ENCODE measurements at regions of chr12 and their contacts with region 1.

Region 1: DNA sequence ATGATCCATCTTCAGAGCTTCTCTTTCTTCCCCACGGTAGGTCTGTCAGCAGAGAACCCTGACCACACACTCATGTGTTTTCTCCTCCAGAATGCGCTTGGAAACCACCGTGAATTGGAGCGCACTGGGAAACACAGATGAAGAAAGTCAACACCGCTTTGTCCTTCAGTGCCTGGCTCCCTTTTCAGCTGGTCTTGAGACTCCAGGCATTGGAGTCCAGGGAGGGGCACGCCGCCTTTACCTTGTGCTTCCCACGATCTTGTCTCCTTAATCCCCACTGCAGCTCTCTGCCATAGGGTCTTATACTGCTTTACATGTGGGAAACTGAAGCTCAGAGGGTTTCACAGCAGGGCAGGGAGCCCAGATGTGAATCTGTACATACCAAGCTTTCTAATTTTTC is 1.1 kb downstream of the FAM90A1 start:
- DNase-seq: no peak
- H3K4me3 ChIP-seq: no peak overlapping the region
- H3K27ac ChIP-seq: no peak overlapping the region
- H3K4me1 ChIP-seq: peaks cover 7% of the 10 kb centered on the region
- H3K27me3 ChIP-seq: no peaks in the 10 kb centered on the region
- CTCF ChIP-seq: no peak
- POLR2A ChIP-seq: no peak

Region 2: GRCh38 chr12:7995266-7995963 is 230.9 kb before region 1 on chr12:
- intact Hi-C with region 1: no loop called
- DNase-seq: peak in 1 of 2 donors; percentile 87
- H3K4me3 ChIP-seq: no peak overlapping the region
- H3K27ac ChIP-seq: peak overlapping the region; percentile 63
- H3K4me1 ChIP-seq: no peaks in the 10 kb centered on the region
- H3K27me3 ChIP-seq: no peaks in the 10 kb centered on the region
- CTCF ChIP-seq: peak; percentile 48 to 95 (median 83)
- POLR2A ChIP-seq: no peak

Region 3: GRCh38 chr12:8108808-8109398 is 117.5 kb before region 1 on chr12:
- intact Hi-C with region 1: loop called (anchors 10 kb)
- DNase-seq: no peak
- H3K4me3 ChIP-seq: no peak overlapping the region
- H3K27ac ChIP-seq: no peak overlapping the region
- H3K4me1 ChIP-seq: no peaks in the 10 kb centered on the region
- H3K27me3 ChIP-seq: no peaks in the 10 kb centered on the region
- CTCF ChIP-seq: peak; percentile 85 to 97 (median 93)
- POLR2A ChIP-seq: no peak